Heart right ventricle (tissue), 16 donors: ENCODE measurements at regions of chr6 and their contacts with region 1.

Region 1: GRCh38 chr6:32894080-32895005 is 40.4 kb downstream of the PSMB9 start:
- DNase-seq: peak; percentile 94 to 95
- ATAC-seq: peak; percentile 99 to 100 (median 100)
- H3K4me3 ChIP-seq: peak overlapping the region; percentile 32 to 82 (median 70)
- H3K27ac ChIP-seq: peak overlapping the region; percentile 62 to 92 (median 86)
- H3K4me1 ChIP-seq: peaks cover 0 to 18% (median 10%) of the 10 kb centered on the region in 9 donors
- H3K27me3 ChIP-seq: no peaks in the 10 kb centered on the region
- CTCF ChIP-seq: peak in 2 of 9 donors; percentile 17 to 27

Region 2: GRCh38 chr6:32933636-32934085 is 39.3 kb after region 1 on chr6:
- intact Hi-C with region 1: loop called in 7 of 10 experiments (anchors 2 to 10 kb)
- DNase-seq: peak; percentile 72 to 83
- ATAC-seq: peak; percentile 50 to 77 (median 68)
- H3K4me3 ChIP-seq: no peak overlapping the region
- H3K27ac ChIP-seq: peak overlapping the region in 1 of 10 donors; percentile 5
- H3K4me1 ChIP-seq: peaks cover 0 to 46% (median 0%) of the 10 kb centered on the region in 9 donors
- H3K27me3 ChIP-seq: no peaks in the 10 kb centered on the region
- CTCF ChIP-seq: peak; percentile 72 to 92 (median 82)